Activated CD4-positive, alpha-beta memory T cell treated with anti-CD3 and anti-CD28 coated beads, Interleukin-2, amount 10 ng/mL, durations not matched to agents 7 days and 5 days (primary cell): ENCODE measurements at regions of chr3 and their contacts with region 1.

Region 1: DNA sequence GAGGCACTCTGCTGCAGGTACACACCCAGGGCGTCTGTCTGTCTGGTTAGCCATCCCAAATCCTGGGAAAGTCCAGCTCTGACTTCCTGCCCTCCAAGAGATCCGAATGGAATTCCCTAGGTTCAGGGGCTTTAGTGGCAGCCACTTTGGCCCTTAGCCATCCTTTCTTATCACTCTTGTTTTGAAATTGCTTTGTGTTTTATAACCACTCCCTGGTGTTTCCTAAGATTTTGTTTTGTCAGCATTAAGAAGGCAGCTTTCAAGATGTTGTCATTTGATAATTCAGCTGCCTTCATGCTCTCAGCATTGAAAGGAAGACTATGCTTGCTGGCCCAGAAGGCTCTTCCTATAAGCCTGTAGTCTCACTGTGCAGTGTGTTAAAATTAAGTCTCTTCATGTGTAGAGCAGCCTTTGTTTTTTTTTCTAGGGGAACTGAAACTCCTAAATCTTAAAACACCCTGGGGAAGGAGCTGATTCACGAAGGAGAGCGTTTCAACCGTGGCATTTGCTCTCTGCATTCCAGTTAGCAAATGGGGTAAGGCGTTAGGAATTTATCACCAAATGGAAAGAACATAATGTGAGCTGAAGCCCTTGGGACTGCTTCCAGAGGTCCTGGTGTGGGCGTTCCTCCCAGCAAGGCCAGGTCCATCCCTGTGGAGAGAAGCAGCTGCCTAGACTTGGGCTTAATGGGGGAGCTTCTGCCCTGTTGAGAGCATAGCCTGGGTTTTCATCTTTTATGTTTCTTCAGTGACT is 14.2 kb upstream of the CLEC3B start:
- DNase-seq: no peak
- H3K4me3 Mint-ChIP-seq: no peak overlapping the region
- H3K27ac Mint-ChIP-seq: peak overlapping the region; percentile 84
- H3K4me1 Mint-ChIP-seq: peaks cover 39% of the 10 kb centered on the region
- H3K27me3 Mint-ChIP-seq: no peaks in the 10 kb centered on the region

Region 2: GRCh38 chr3:44976002-44976815 is 35.7 kb before region 1 on chr3 and contains the starts of genes EXOSC7 and ZDHHC3:
- CTCF ChIA-PET with region 1: no interaction called
- POLR2A ChIA-PET with region 1: interaction called, 10 read pairs
- DNase-seq: peak; percentile 89
- H3K4me3 Mint-ChIP-seq: peak within 1 kb of the TSS; percentile 88
- H3K27ac Mint-ChIP-seq: peak within 1 kb of the TSS; percentile 83
- H3K4me1 Mint-ChIP-seq: peaks cover 59% of the 10 kb centered on the region
- H3K27me3 Mint-ChIP-seq: no peaks in the 10 kb centered on the region
- total RNA-seq, gene EXOSC7: 38.0 to 40.8 TPM
- total RNA-seq, gene ZDHHC3: 46.6 to 51.6 TPM

Region 3: GRCh38 chr3:45026957-45027356 is 15.0 kb after region 1 on chr3:
- CTCF ChIA-PET with region 1: no interaction called
- POLR2A ChIA-PET with region 1: no interaction called
- DNase-seq: no peak
- H3K4me3 Mint-ChIP-seq: no peak overlapping the region
- H3K27ac Mint-ChIP-seq: no peak overlapping the region
- H3K4me1 Mint-ChIP-seq: no peaks in the 10 kb centered on the region
- H3K27me3 Mint-ChIP-seq: peaks cover 19% of the 10 kb centered on the region

Region 4: DNA sequence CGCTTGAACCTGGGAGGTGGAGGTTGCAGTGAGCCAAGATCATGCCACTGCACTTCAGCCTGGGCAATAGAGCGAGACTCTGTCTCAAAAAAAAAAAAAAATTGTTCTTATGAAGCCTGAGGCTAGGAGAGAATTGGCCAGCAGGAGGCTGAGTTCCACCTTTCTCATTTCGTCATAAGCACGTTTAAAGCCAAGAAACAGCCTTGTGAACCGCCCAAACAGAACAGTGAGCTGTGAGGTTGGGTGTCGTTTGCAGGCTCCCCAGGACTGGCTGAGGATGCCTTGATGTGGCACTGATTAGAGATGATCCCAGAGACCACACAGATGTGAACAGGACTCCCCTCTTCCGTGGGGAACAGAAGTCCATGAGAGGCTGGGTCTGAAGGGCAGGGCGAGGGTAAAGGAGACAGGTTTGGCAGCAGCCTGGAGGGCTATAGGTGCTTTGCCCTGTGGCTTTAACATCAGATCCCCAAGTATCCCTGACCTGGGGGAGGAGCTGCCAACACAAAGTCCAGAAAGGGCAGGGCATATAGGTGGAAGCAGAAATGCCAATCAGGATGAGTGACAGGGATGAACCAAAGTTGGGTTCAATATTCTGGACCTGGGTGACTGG is 67.1 kb after region 1 on chr3:
- CTCF ChIA-PET with region 1: no interaction called
- POLR2A ChIA-PET with region 1: no interaction called
- DNase-seq: no peak
- H3K4me3 Mint-ChIP-seq: no peak overlapping the region
- H3K27ac Mint-ChIP-seq: no peak overlapping the region
- H3K4me1 Mint-ChIP-seq: no peaks in the 10 kb centered on the region
- H3K27me3 Mint-ChIP-seq: peaks cover 14% of the 10 kb centered on the region